ENCODE measurements at regions of chr2 and their contacts with region 1.

Region 1: GRCh38 chr2:46876741-46877384 is 38.7 kb downstream of the MCFD2 start:
- DNase-seq: peak; percentile 42 to 50
- H3K4me3 ChIP-seq: no peak overlapping the region
- H3K4me3 Mint-ChIP-seq: no peak overlapping the region
- H3K27ac Mint-ChIP-seq: no peak overlapping the region
- H3K4me1 ChIP-seq: peaks cover 14% of the 10 kb centered on the region
- H3K4me1 Mint-ChIP-seq: peaks cover 10% of the 10 kb centered on the region
- H3K27me3 ChIP-seq: no peaks in the 10 kb centered on the region
- H3K27me3 Mint-ChIP-seq: no peaks in the 10 kb centered on the region
- CTCF ChIP-seq: peak; percentile 43 to 48

Region 2: GRCh38 chr2:46751897-46752296 is 125.0 kb before region 1 on chr2:
- CTCF ChIA-PET with region 1: no interaction called
- POLR2A ChIA-PET with region 1: no interaction called
- intact Hi-C with region 1: no loop called
- DNase-seq: no peak
- H3K4me3 ChIP-seq: no peak overlapping the region
- H3K4me3 Mint-ChIP-seq: no peak overlapping the region
- H3K27ac Mint-ChIP-seq: no peak overlapping the region
- H3K4me1 ChIP-seq: peaks cover 9% of the 10 kb centered on the region
- H3K4me1 Mint-ChIP-seq: peaks cover 19% of the 10 kb centered on the region
- H3K27me3 ChIP-seq: no peaks in the 10 kb centered on the region
- H3K27me3 Mint-ChIP-seq: no peaks in the 10 kb centered on the region
- CTCF ChIP-seq: no peak

Region 3: GRCh38 chr2:46769809-46770208 is 107.1 kb before region 1 on chr2:
- CTCF ChIA-PET with region 1: no interaction called
- POLR2A ChIA-PET with region 1: no interaction called
- intact Hi-C with region 1: loop called (anchors 2 kb)
- DNase-seq: no peak
- H3K4me3 ChIP-seq: no peak overlapping the region
- H3K4me3 Mint-ChIP-seq: peak overlapping the region; percentile 75
- H3K27ac Mint-ChIP-seq: peak overlapping the region; percentile 53
- H3K4me1 ChIP-seq: peaks cover 4% of the 10 kb centered on the region; the same call in 1 of the 2 replicates
- H3K4me1 Mint-ChIP-seq: peaks cover 15% of the 10 kb centered on the region
- H3K27me3 ChIP-seq: no peaks in the 10 kb centered on the region
- H3K27me3 Mint-ChIP-seq: no peaks in the 10 kb centered on the region
- CTCF ChIP-seq: peak in 1 of 2 experiments; percentile 37

Region 4: GRCh38 chr2:47174733-47175361 is 298.0 kb after region 1 on chr2:
- CTCF ChIA-PET with region 1: no interaction called
- POLR2A ChIA-PET with region 1: no interaction called
- intact Hi-C with region 1: no loop called
- DNase-seq: peak; percentile 38 to 54
- H3K4me3 ChIP-seq: peak overlapping the region; percentile 98
- H3K4me3 Mint-ChIP-seq: peak overlapping the region; percentile 98
- H3K27ac Mint-ChIP-seq: peak overlapping the region; percentile 97
- H3K4me1 ChIP-seq: peaks cover 43% of the 10 kb centered on the region
- H3K4me1 Mint-ChIP-seq: peaks cover 37% of the 10 kb centered on the region
- H3K27me3 ChIP-seq: no peaks in the 10 kb centered on the region
- H3K27me3 Mint-ChIP-seq: no peaks in the 10 kb centered on the region
- CTCF ChIP-seq: no peak